Esophagus muscularis mucosa (tissue), 4 donors: ENCODE measurements at regions of chr15 and their contacts with region 1.

Region 1: GRCh38 chr15:61051569-61052031 is 177.5 kb downstream of the RORA start:
- DNase-seq: peak; percentile 91
- H3K4me3 ChIP-seq: no peak overlapping the region
- H3K27ac ChIP-seq: peak overlapping the region; percentile 54 to 71 (median 64)
- H3K4me1 ChIP-seq: peaks cover 0 to 26% (median 19%) of the 10 kb centered on the region in 4 donors
- H3K27me3 ChIP-seq: no peaks in the 10 kb centered on the region
- CTCF ChIP-seq: peak; percentile 71 to 84 (median 81)
- EP300 ChIP-seq: no peak
- POLR2A ChIP-seq: no peak

Region 2: DNA sequence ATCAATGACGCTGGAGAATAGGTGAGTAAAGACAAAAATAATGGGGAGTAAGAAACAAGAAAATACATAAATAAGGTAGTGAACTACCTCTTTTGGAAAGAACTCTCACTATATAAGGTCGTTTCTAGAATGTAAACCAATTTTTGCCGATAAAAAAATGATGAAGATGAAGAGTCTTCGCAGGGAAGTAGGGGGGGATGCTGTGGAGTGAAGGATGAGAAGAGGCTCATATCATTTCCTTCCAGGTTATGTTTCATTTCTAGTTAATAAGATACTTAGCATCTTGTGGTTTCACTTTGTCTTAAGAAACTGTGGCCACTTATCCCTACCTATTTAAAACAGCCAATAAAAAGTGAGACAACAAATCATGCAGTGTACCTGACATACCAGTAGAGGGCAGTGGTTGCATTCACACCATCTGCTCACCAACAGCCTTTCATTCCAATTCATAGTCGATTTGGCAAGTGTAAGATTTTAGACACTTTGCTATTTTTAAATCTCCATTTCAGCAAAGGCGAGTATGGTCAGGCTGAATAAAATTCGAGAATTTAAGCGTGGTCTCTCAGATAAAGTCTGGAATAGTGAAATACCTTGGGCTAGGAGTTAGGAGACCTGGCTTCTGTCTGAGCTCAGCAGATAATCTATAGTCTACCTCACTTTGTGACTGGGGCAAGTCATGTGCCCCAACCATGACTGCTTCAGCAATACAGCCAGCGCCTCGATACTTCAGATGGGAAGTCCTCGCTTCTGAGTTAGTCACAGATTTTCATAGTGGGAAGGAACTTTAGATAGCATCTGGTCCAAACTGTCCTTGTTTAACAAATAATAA is 543.8 kb before region 1 on chr15:
- intact Hi-C with region 1: loop called (anchors 10 kb)
- DNase-seq: no peak
- H3K4me3 ChIP-seq: no peak overlapping the region
- H3K27ac ChIP-seq: peak overlapping the region in 1 of 4 donors; percentile 10
- H3K4me1 ChIP-seq: peaks cover 11 to 15% (median 13%) of the 10 kb centered on the region in 4 donors
- H3K27me3 ChIP-seq: no peaks in the 10 kb centered on the region
- CTCF ChIP-seq: peak; percentile 92 to 94 (median 92)
- EP300 ChIP-seq: no peak
- POLR2A ChIP-seq: no peak

Region 3: GRCh38 chr15:60585743-60586708 is 465.6 kb before region 1 on chr15:
- intact Hi-C with region 1: loop called (anchors 5 kb)
- DNase-seq: no peak
- H3K4me3 ChIP-seq: no peak overlapping the region
- H3K27ac ChIP-seq: peak overlapping the region; percentile 1 to 34 (median 7)
- H3K4me1 ChIP-seq: peaks cover 32 to 82% (median 64%) of the 10 kb centered on the region in 4 donors
- H3K27me3 ChIP-seq: no peaks in the 10 kb centered on the region
- CTCF ChIP-seq: peak; percentile 89 to 92 (median 89)
- EP300 ChIP-seq: no peak
- POLR2A ChIP-seq: no peak

Region 4: GRCh38 chr15:60982249-60982910 is 69.2 kb before region 1 on chr15:
- intact Hi-C with region 1: loop called (anchors 10 kb)
- DNase-seq: peak; percentile 57
- H3K4me3 ChIP-seq: no peak overlapping the region
- H3K27ac ChIP-seq: no peak overlapping the region
- H3K4me1 ChIP-seq: no peaks in the 10 kb centered on the region
- H3K27me3 ChIP-seq: no peaks in the 10 kb centered on the region
- CTCF ChIP-seq: no peak
- EP300 ChIP-seq: no peak
- POLR2A ChIP-seq: no peak

Region 5: GRCh38 chr15:61163234-61163633 is 111.6 kb after region 1 on chr15:
- intact Hi-C with region 1: no loop called
- DNase-seq: no peak
- H3K4me3 ChIP-seq: no peak overlapping the region
- H3K27ac ChIP-seq: no peak overlapping the region
- H3K4me1 ChIP-seq: peaks cover 0 to 7% (median 3%) of the 10 kb centered on the region in 4 donors
- H3K27me3 ChIP-seq: no peaks in the 10 kb centered on the region
- CTCF ChIP-seq: no peak
- EP300 ChIP-seq: no peak
- POLR2A ChIP-seq: no peak